ENCODE measurements at regions of chr13 and their contacts with region 1.

Region 1: GRCh38 chr13:36999054-36999714 is at the start of gene ALG5:
- DNase-seq: peak; percentile 96
- ATAC-seq: peak; percentile 72
- H3K4me3 Mint-ChIP-seq: peak within 1 kb of the TSS; percentile 99
- H3K27ac Mint-ChIP-seq: peak within 1 kb of the TSS; percentile 100
- H3K4me1 Mint-ChIP-seq: peaks cover 35% of the 10 kb centered on the region
- H3K27me3 Mint-ChIP-seq: no peaks in the 10 kb centered on the region
- CTCF ChIP-seq: peak; percentile 53
- total RNA-seq, gene ALG5: 24.0 and 25.8 TPM in 2 replicates

Region 2: DNA sequence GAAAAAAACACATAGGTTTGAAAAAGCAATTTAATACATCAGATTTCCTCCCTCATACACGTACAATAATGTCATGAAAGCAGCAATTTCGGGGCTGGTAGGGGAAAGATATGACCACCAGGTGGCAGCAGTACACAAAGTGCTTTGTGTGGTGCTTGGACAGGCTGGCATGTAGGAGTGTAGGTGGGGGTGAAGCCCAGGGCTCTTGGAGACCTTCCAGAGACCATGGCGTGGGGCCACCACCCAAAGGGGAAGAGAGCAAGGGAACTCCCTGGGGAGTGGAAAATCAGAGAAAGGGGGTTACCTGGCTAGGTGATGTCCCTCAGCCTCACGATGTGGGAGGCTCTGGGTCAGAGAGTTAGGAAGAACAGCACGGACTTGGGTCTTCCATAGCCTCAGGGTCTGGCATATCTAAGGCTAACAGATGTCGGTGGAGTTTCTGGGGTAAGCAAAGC is 578.7 kb before region 1 on chr13:
- CTCF ChIA-PET with region 1: no interaction called
- POLR2A ChIA-PET with region 1: no interaction called
- intact Hi-C with region 1: loop called (anchors 5 kb)
- DNase-seq: peak; percentile 34
- ATAC-seq: peak; percentile 86
- H3K4me3 Mint-ChIP-seq: no peak overlapping the region
- H3K27ac Mint-ChIP-seq: no peak overlapping the region
- H3K4me1 Mint-ChIP-seq: peaks cover 8% of the 10 kb centered on the region
- H3K27me3 Mint-ChIP-seq: peaks cover 13% of the 10 kb centered on the region
- CTCF ChIP-seq: peak; percentile 92

Region 3: GRCh38 chr13:36973621-36974295 is 25.4 kb before region 1 on chr13:
- CTCF ChIA-PET with region 1: no interaction called
- POLR2A ChIA-PET with region 1: interaction called, 13 read pairs
- intact Hi-C with region 1: no loop called
- DNase-seq: no peak
- ATAC-seq: no peak
- H3K4me3 Mint-ChIP-seq: no peak overlapping the region
- H3K27ac Mint-ChIP-seq: peak overlapping the region; percentile 36
- H3K4me1 Mint-ChIP-seq: peaks cover 12% of the 10 kb centered on the region
- H3K27me3 Mint-ChIP-seq: no peaks in the 10 kb centered on the region
- CTCF ChIP-seq: no peak

Region 4: GRCh38 chr13:37011788-37012187 is 12.6 kb after region 1 on chr13:
- CTCF ChIA-PET with region 1: no interaction called
- POLR2A ChIA-PET with region 1: interaction called, 10 read pairs
- intact Hi-C with region 1: no loop called
- DNase-seq: no peak
- ATAC-seq: no peak
- H3K4me3 Mint-ChIP-seq: no peak overlapping the region
- H3K27ac Mint-ChIP-seq: no peak overlapping the region
- H3K4me1 Mint-ChIP-seq: no peaks in the 10 kb centered on the region
- H3K27me3 Mint-ChIP-seq: no peaks in the 10 kb centered on the region
- CTCF ChIP-seq: no peak

Region 5: DNA sequence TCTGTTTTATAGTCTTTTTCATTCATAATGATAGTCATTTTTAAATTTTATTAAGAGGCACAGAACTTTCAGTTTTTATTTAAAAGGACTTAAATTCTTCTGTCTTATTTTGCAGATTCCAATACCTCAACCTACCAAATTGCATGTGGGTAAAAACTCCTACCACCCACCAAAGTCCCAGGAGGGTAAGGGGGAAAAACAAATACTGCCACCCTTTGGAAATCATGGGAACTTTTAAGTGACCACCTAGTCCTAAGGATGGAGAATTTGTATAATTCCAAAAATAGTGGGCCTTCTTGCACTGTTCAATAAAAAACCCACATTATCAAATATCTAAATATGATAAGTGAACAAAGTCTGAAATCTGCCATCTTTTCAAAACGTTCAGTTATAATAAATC is 50.6 kb after region 1 on chr13:
- CTCF ChIA-PET with region 1: no interaction called
- POLR2A ChIA-PET with region 1: no interaction called
- intact Hi-C with region 1: no loop called
- DNase-seq: no peak
- ATAC-seq: no peak
- H3K4me3 Mint-ChIP-seq: no peak overlapping the region
- H3K27ac Mint-ChIP-seq: no peak overlapping the region
- H3K4me1 Mint-ChIP-seq: peaks cover 18% of the 10 kb centered on the region
- H3K27me3 Mint-ChIP-seq: no peaks in the 10 kb centered on the region
- CTCF ChIP-seq: no peak

Region 6: GRCh38 chr13:38349390-38350113 is 1350.4 kb after region 1 on chr13 and contains the start of gene UFM1:
- CTCF ChIA-PET with region 1: no interaction called
- POLR2A ChIA-PET with region 1: interaction called, 12 read pairs
- intact Hi-C with region 1: loop called (anchors 1 kb)
- DNase-seq: peak; percentile 76
- ATAC-seq: peak; percentile 95
- H3K4me3 Mint-ChIP-seq: peak within 1 kb of the TSS; percentile 98
- H3K27ac Mint-ChIP-seq: peak within 1 kb of the TSS; percentile 97
- H3K4me1 Mint-ChIP-seq: peaks cover 33% of the 10 kb centered on the region
- H3K27me3 Mint-ChIP-seq: no peaks in the 10 kb centered on the region
- CTCF ChIP-seq: no peak
- total RNA-seq, gene UFM1: 49.4 and 55.7 TPM in 2 replicates